ENCODE measurements at regions of chr3 and their contacts with region 1.

Region 1: DNA sequence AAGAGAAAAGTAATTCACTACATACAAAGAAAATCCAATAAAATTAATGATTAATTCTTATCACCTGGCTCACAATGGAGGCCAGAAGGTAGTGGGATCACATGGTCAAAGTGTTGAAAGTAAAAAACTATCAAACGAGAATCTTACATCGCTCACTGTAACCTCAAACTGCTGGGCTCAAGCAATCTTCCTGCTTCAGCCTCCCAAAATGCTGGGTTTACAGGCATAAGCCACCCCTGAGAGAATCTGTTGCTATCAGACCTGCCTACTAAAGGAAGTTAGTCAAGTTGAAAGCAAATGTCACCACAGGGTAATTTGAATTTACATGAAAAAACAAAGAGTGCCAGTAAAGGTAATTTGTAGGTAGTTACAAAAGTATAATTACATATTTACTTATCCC is 103.3 kb downstream of the PCCB start:
- DNase-seq: no peak
- H3K4me3 ChIP-seq: no peak overlapping the region
- H3K27ac ChIP-seq: no peak overlapping the region
- H3K4me1 ChIP-seq: no peaks in the 10 kb centered on the region
- H3K27me3 ChIP-seq: no peaks in the 10 kb centered on the region
- CTCF ChIP-seq: no peak

Region 2: GRCh38 chr3:136396916-136397315 is 43.5 kb after region 1 on chr3:
- CTCF ChIA-PET with region 1: no interaction called
- POLR2A ChIA-PET with region 1: no interaction called
- intact Hi-C with region 1: no loop called
- DNase-seq: no peak
- H3K4me3 ChIP-seq: no peak overlapping the region
- H3K27ac ChIP-seq: no peak overlapping the region
- H3K4me1 ChIP-seq: no peaks in the 10 kb centered on the region
- H3K27me3 ChIP-seq: no peaks in the 10 kb centered on the region
- CTCF ChIP-seq: no peak

Region 3: DNA sequence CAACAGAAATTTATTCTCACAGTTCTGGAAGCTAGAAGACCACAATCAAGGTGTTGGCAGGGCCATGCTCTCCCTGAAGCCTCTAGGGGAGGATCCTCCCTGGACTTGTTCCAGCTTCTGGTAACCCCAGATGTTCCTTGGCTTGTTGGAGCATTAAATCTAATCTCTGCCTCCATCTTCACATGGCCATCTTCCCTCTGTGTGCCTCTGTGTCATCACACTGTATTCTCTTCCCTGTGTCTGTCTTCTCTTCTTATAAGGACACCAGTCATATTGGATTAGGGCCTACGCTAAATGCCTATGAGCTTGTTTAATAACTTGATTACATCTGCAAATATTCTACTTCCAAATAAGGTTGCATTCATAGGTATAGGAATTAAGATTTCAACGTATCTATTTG is 289.3 kb after region 1 on chr3:
- CTCF ChIA-PET with region 1: no interaction called
- POLR2A ChIA-PET with region 1: no interaction called
- intact Hi-C with region 1: no loop called
- DNase-seq: no peak
- H3K4me3 ChIP-seq: no peak overlapping the region
- H3K27ac ChIP-seq: no peak overlapping the region
- H3K4me1 ChIP-seq: peaks cover 14% of the 10 kb centered on the region
- H3K27me3 ChIP-seq: no peaks in the 10 kb centered on the region
- CTCF ChIP-seq: no peak

Region 4: GRCh38 chr3:136708333-136708985 is 355.0 kb after region 1 on chr3:
- CTCF ChIA-PET with region 1: interaction called, 17 read pairs
- POLR2A ChIA-PET with region 1: no interaction called
- intact Hi-C with region 1: no loop called
- DNase-seq: no peak
- H3K4me3 ChIP-seq: no peak overlapping the region
- H3K27ac ChIP-seq: no peak overlapping the region
- H3K4me1 ChIP-seq: no peaks in the 10 kb centered on the region
- H3K27me3 ChIP-seq: no peaks in the 10 kb centered on the region
- CTCF ChIP-seq: no peak